ENCODE measurements at regions of chr11 and their contacts with region 1.

Region 1: DNA sequence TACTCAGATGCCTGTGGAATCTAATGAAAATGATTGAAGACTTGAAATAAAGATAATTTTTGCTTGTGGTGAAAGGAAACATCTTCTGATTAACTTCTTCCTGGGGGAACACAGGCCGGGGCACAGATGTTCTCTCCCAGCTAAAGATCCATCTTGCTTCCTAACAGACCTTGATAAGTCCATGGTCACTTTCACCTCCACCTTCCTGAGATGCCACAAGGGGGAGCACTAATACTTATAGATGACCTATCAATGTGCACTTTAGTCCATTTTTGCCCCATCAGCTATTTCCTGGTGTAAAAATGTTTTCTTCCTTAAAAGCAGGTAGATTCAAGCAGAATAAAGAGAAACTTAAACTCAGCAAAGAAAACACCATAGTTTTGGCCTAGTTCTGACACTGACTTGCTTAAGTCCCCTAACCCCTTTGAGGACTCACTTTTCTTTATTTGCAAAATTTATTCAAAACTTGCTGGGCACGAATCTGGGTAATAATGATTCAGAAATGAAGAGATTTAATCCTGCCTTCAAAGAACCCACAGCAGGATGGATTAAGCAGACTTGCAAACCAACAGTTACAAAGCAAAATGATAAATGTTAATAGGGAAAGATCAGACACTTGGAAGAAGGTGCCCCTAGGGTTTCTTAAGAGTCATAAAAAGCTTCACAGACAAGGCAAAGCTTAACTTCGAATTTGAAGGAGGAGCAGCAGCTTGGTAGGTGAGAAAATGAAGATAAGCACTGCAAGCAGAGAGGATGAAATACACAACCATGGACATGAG is 158.7 kb downstream of the RAB38 start:
- DNase-seq: peak; percentile 69
- H3K4me3 ChIP-seq: no peak overlapping the region
- H3K27ac ChIP-seq: no peak overlapping the region
- H3K4me1 ChIP-seq: peaks cover 0 to 5% (median 0%) of the 10 kb centered on the region in 4 donors
- H3K27me3 ChIP-seq: no peaks in the 10 kb centered on the region
- CTCF ChIP-seq: peak; percentile 77 to 82 (median 77)
- EP300 ChIP-seq: no peak
- POLR2A ChIP-seq: no peak

Region 2: GRCh38 chr11:88357323-88358039 is 340.9 kb after region 1 on chr11:
- in situ Hi-C with region 1: loop called in 1 of 4 experiments (anchors 25 kb)
- intact Hi-C with region 1: no loop called
- DNase-seq: no peak
- H3K4me3 ChIP-seq: no peak overlapping the region
- H3K27ac ChIP-seq: peak overlapping the region in 1 of 4 donors; percentile 15
- H3K4me1 ChIP-seq: peaks cover 0 to 8% (median 2%) of the 10 kb centered on the region in 4 donors
- H3K27me3 ChIP-seq: no peaks in the 10 kb centered on the region
- CTCF ChIP-seq: no peak
- EP300 ChIP-seq: no peak
- POLR2A ChIP-seq: no peak

Region 3: GRCh38 chr11:88543902-88544655 is 527.5 kb after region 1 on chr11:
- in situ Hi-C with region 1: loop called in 3 of 4 experiments (anchors 25 kb)
- intact Hi-C with region 1: no loop called
- DNase-seq: peak; percentile 84
- H3K4me3 ChIP-seq: no peak overlapping the region
- H3K27ac ChIP-seq: no peak overlapping the region
- H3K4me1 ChIP-seq: peaks cover 0 to 4% (median 0%) of the 10 kb centered on the region in 4 donors
- H3K27me3 ChIP-seq: no peaks in the 10 kb centered on the region
- CTCF ChIP-seq: peak; percentile 86 to 91 (median 90)
- EP300 ChIP-seq: no peak
- POLR2A ChIP-seq: no peak

Region 4: GRCh38 chr11:88552377-88553062 is 535.9 kb after region 1 on chr11:
- in situ Hi-C with region 1: loop called (anchors 25 kb)
- intact Hi-C with region 1: no loop called
- DNase-seq: peak; percentile 42
- H3K4me3 ChIP-seq: no peak overlapping the region
- H3K27ac ChIP-seq: no peak overlapping the region
- H3K4me1 ChIP-seq: no peaks in the 10 kb centered on the region
- H3K27me3 ChIP-seq: no peaks in the 10 kb centered on the region
- CTCF ChIP-seq: peak; percentile 23 to 53 (median 37)
- EP300 ChIP-seq: no peak
- POLR2A ChIP-seq: no peak